ENCODE measurements at regions of chr4 and their contacts with region 1.

Region 1: GRCh38 chr4:156475322-156475721 is 496.3 kb downstream of the PDGFC start:
- DNase-seq: peak; percentile 80
- H3K4me3 ChIP-seq: no peak overlapping the region
- H3K27ac ChIP-seq: peak overlapping the region; percentile 57
- H3K4me1 ChIP-seq: peaks cover 14% of the 10 kb centered on the region
- H3K27me3 ChIP-seq: no peaks in the 10 kb centered on the region
- CTCF ChIP-seq: peak; percentile 68

Region 2: DNA sequence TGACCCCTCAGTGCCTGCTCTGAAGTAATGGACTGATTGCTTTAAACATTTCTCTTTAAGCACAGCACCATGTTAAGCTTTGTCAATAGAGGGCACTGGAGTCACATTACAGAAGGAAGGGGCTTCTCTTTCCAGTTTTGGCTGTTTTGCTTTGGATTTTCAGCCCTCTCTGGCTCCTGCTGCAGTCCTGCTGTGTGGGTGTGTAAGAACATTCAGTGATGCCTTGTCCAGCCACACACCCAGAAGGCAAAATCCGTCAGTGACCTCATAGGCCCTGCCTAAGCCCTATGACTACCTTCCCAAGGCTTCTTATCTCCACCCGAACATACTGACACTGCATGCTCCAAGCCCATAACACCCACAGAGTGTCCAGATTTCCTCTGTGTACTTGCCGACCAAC is 306.3 kb before region 1 on chr4:
- CTCF ChIA-PET with region 1: interaction called, 4 read pairs
- POLR2A ChIA-PET with region 1: no interaction called
- intact Hi-C with region 1: loop called (anchors 5 kb)
- DNase-seq: peak; percentile 85
- H3K4me3 ChIP-seq: no peak overlapping the region
- H3K27ac ChIP-seq: no peak overlapping the region
- H3K4me1 ChIP-seq: peaks cover 15% of the 10 kb centered on the region
- H3K27me3 ChIP-seq: no peaks in the 10 kb centered on the region
- CTCF ChIP-seq: peak; percentile 77

Region 3: DNA sequence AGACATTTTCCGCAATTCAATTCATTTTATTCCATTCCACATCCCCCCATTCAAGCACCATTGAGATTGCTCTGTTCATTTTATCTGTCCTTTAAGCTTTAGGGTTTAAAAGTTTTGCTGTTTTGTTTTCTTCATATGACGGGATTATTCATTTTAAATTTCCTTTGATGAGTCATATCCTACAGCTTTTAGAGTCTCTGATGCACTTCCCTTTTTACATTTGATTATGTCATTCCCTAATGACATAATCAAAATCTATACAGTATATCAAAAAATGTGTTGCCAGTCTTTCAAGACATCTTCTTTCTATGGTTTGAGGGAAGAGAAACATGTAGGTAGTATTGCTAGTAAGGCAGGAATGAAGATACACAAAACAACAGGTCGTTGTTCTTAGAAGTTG is 40.0 kb after region 1 on chr4:
- CTCF ChIA-PET with region 1: interaction called, 3 read pairs
- POLR2A ChIA-PET with region 1: no interaction called
- intact Hi-C with region 1: loop called (anchors 1 kb)
- DNase-seq: peak; percentile 62
- H3K4me3 ChIP-seq: no peak overlapping the region
- H3K27ac ChIP-seq: peak overlapping the region; percentile 92
- H3K4me1 ChIP-seq: peaks cover 78% of the 10 kb centered on the region
- H3K27me3 ChIP-seq: no peaks in the 10 kb centered on the region
- CTCF ChIP-seq: no peak

Region 4: GRCh38 chr4:156677131-156677531 is 201.8 kb after region 1 on chr4:
- CTCF ChIA-PET with region 1: no interaction called
- POLR2A ChIA-PET with region 1: no interaction called
- intact Hi-C with region 1: loop called (anchors 10 kb)
- DNase-seq: peak; percentile 45
- H3K4me3 ChIP-seq: no peak overlapping the region
- H3K27ac ChIP-seq: no peak overlapping the region
- H3K4me1 ChIP-seq: peaks cover 12% of the 10 kb centered on the region
- H3K27me3 ChIP-seq: no peaks in the 10 kb centered on the region
- CTCF ChIP-seq: peak; percentile 44

Region 5: GRCh38 chr4:157045507-157046127 is 570.3 kb after region 1 on chr4:
- CTCF ChIA-PET with region 1: interaction called, 14 read pairs
- POLR2A ChIA-PET with region 1: no interaction called
- intact Hi-C with region 1: loop called (anchors 1 kb)
- DNase-seq: peak; percentile 86
- H3K4me3 ChIP-seq: no peak overlapping the region
- H3K27ac ChIP-seq: no peak overlapping the region
- H3K4me1 ChIP-seq: peaks cover 19% of the 10 kb centered on the region
- H3K27me3 ChIP-seq: no peaks in the 10 kb centered on the region
- CTCF ChIP-seq: peak; percentile 89

Region 6: DNA sequence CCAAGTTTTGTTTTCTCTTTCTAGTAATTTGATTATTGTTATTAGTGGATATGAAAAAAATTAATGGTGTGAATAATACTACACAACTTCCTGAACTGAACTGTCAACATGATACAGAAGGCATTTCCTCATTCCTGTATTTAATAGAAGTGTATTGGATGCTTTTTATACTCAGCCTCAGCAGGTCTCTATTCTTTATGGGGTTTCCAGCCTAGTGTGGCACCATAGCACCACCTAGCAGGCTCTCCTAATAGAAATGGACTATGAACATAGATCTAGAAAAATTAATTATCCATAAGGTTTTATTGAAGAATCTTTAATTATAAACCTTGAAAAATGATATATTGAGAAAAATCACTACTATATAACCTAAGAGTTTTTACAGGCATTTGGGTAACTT is 653.1 kb after region 1 on chr4:
- CTCF ChIA-PET with region 1: no interaction called
- POLR2A ChIA-PET with region 1: no interaction called
- intact Hi-C with region 1: loop called (anchors 2 kb)
- DNase-seq: peak; percentile 69
- H3K4me3 ChIP-seq: no peak overlapping the region
- H3K27ac ChIP-seq: no peak overlapping the region
- H3K4me1 ChIP-seq: peaks cover 10% of the 10 kb centered on the region
- H3K27me3 ChIP-seq: no peaks in the 10 kb centered on the region
- CTCF ChIP-seq: peak; percentile 67

Region 7: DNA sequence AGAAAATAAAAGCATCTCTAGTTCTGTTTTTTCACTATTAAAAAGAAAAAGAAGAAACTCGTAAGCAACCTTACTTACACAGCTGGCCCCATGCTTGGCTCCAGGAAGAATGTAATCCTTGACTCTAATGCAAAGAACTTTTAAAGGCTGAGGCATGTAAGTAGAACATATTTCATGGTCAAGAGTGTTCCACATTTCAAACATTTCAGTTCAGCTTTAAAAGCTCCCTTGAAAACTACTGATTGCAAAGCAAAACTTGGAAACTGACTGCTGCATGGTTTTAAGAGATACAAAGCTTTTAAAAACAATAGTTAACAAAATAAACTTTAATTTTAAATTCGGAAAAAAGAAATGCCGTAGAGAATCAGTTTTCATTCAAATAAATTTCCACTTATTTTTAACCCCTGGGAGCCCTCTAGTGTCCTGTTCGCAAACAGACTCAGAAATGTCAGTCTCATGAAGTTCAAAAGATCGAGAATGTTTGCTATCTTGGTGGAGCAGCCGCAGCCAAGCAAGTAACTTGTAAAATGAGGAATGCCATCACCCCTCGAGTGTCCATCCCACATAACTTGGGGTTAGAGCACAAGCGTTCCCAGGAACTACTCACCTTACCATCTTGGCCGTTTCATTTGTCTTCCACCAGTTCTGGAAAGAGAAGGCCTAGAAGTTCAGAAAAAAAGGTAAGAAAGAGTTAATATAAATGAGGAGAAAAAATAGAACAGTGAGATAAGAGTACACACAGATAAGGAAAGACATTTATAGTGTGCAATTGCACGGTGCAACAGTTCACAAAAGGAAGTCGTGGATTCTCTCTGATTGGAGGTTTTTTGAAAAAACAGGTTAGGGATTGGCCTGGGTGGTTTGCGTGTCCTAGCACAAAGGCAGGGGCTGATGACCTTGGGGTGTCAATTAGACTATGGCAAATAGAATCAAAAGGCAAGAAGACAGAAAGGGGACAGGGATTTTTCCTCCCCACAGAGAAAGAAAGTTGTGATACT is 1697.2 kb after region 1 on chr4 and contains the start of gene GASK1B:
- CTCF ChIA-PET with region 1: no interaction called
- POLR2A ChIA-PET with region 1: no interaction called
- intact Hi-C with region 1: loop called (anchors 5 kb)
- DNase-seq: peak; percentile 76
- H3K4me3 ChIP-seq: peak within 1 kb of the TSS; percentile 34
- H3K27ac ChIP-seq: peak within 1 kb of the TSS; percentile 62
- H3K4me1 ChIP-seq: peaks cover 19% of the 10 kb centered on the region
- H3K27me3 ChIP-seq: no peaks in the 10 kb centered on the region
- CTCF ChIP-seq: peak; percentile 81
- total RNA-seq, gene GASK1B: 3.1 and 3.8 TPM in 2 replicates

Measured in A673 (cell line).